ENCODE measurements at regions of chr9 and their contacts with region 1.

Region 1: DNA sequence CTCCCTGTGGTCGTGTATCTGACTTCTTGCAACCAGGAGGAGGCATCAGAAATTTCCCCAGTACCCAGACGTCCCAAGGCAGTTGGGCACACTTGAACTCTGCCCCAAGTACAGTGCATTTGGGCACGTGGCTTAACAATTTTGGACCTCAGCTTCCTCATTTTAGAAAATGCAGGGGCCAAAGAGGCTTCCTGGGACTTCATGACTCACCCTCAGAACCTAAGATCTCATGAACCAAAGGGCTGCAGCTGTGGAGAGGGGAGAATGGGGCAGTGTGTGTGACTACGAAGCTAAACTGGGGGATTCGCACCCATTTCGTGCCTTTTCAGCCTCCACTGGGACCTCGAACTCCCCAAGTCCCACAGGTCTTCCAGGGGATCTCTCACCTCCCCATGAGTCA is 59.2 kb downstream of the SYK start:
- DNase-seq: no peak
- ATAC-seq: peak; percentile 89
- H3K4me3 Mint-ChIP-seq: peak overlapping the region; percentile 6
- H3K27ac Mint-ChIP-seq: peak overlapping the region; percentile 82
- H3K4me1 Mint-ChIP-seq: peaks cover 59% of the 10 kb centered on the region
- H3K27me3 Mint-ChIP-seq: no peaks in the 10 kb centered on the region
- CTCF ChIP-seq: no peak

Region 2: DNA sequence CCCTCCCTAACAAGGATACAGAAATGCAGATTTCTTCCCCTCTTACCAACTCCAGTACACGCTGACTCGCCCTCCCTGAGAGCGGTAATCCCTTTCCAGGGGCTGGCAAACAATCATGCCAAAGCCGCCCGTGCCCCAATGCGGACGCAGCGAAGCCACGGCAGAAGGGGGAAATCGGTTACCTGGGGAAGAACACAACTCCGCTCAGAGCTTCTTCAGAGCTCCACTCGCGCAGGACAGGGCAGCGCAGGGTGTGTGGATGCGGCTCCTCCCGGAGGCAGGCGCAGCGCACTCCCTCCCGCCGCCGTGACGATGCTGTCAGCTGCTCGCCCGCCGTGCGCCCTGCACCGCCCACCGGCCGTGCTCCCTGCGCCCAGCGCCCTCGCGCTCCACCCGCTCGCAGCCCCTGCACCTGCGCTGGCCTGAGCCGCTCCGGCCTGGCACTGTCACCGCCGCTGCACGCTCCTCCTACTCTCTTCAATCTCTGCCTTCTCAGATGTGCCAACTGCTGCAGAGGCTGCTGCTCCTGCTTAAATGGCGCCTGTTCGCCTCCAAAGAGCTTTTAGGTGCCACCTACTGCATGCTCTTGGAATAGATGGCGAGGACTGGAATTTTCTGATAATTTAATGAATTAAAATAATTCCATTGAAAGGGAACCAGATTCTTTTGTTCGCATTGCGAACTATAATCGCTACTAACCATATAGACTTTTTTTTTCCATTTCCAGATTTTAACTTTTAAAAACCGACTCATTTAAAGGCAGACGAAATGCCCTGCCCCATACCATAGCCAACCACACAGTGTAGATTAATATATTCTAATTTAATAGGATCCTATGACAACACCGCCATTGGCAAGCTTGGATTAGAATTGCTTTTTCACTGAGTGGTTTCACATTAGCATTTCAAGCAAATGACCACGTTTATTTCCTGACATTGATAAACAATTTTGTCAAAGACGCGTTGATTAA is 218.0 kb before region 1 on chr9 and contains the start of gene DIRAS2:
- CTCF ChIA-PET with region 1: no interaction called
- POLR2A ChIA-PET with region 1: no interaction called
- intact Hi-C with region 1: loop called (anchors 10 kb)
- DNase-seq: no peak
- ATAC-seq: peak; percentile 71
- H3K4me3 Mint-ChIP-seq: peak within 1 kb of the TSS; percentile 78
- H3K27ac Mint-ChIP-seq: no peak within 1 kb of the TSS
- H3K4me1 Mint-ChIP-seq: peaks cover 13% of the 10 kb centered on the region
- H3K27me3 Mint-ChIP-seq: peaks cover 58% of the 10 kb centered on the region
- CTCF ChIP-seq: no peak
- total RNA-seq, gene DIRAS2: not detected in 2 replicates

Region 3: GRCh38 chr9:90838100-90838499 is 22.7 kb before region 1 on chr9:
- CTCF ChIA-PET with region 1: interaction called, 4 read pairs
- POLR2A ChIA-PET with region 1: interaction called, 3 read pairs
- intact Hi-C with region 1: loop called (anchors 2 kb)
- DNase-seq: no peak
- ATAC-seq: no peak
- H3K4me3 Mint-ChIP-seq: peak overlapping the region; percentile 36
- H3K27ac Mint-ChIP-seq: no peak overlapping the region
- H3K4me1 Mint-ChIP-seq: peaks cover 69% of the 10 kb centered on the region
- H3K27me3 Mint-ChIP-seq: no peaks in the 10 kb centered on the region
- CTCF ChIP-seq: no peak

Region 4: GRCh38 chr9:90848866-90849265 is 12.0 kb before region 1 on chr9:
- CTCF ChIA-PET with region 1: no interaction called
- POLR2A ChIA-PET with region 1: no interaction called
- intact Hi-C with region 1: no loop called
- DNase-seq: no peak
- ATAC-seq: no peak
- H3K4me3 Mint-ChIP-seq: no peak overlapping the region
- H3K27ac Mint-ChIP-seq: peak overlapping the region; percentile 3
- H3K4me1 Mint-ChIP-seq: peaks cover 1% of the 10 kb centered on the region
- H3K27me3 Mint-ChIP-seq: no peaks in the 10 kb centered on the region
- CTCF ChIP-seq: no peak

Region 5: DNA sequence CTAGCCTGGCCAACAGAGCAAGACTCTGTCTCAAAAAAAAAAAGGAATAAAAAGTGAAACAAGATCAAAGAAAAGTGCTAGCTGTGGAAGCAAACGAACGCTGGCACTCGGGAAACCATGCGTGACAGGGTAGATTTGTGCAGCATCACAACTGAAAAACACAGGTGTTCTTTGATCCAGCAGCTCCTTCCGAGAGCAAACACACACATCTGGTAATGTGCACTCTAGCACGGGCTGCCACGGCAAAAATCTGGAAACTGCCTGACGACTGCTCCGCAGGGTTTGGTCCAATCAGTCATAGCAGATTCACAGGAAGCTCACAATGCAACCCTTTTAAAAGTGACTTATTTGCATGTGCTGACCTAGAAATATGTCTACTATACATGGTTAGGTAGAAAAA is 20.8 kb after region 1 on chr9:
- CTCF ChIA-PET with region 1: no interaction called
- POLR2A ChIA-PET with region 1: no interaction called
- intact Hi-C with region 1: loop called (anchors 2 kb)
- DNase-seq: peak; percentile 30
- ATAC-seq: peak; percentile 66
- H3K4me3 Mint-ChIP-seq: no peak overlapping the region
- H3K27ac Mint-ChIP-seq: peak overlapping the region; percentile 92
- H3K4me1 Mint-ChIP-seq: peaks cover 41% of the 10 kb centered on the region
- H3K27me3 Mint-ChIP-seq: no peaks in the 10 kb centered on the region
- CTCF ChIP-seq: no peak

Measured in activated B cell treated with CpG ODN at 0.5 μM for 24 hours (primary cell).